ENCODE measurements at regions of chr14 and their contacts with region 1.

Region 1: DNA sequence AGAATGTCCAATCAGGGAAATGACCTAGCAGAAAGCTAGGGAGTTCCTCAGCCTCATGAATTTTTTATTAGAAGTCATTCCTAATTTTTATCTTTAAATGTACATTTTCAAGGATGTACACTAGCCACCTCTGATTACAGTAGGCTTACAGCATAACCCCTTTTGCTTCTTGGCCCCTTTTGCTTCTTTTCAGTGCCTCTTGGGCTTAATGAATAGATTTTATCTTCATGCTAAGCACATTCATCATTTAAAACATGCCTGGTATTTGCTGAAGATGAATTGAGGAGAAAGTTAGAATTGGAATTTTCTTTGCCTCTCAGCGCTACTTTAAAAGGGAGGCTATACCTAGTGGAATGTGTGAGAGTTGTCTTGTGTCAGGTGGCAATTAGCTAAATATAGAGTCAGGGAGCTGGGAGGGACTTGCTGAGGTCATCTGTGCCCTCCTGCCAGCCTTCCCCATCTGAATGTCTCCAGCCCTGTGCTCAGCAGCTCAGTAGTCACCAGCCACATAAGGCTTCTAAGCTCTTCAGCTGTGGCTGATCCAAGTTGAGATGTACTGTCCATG is 132.1 kb downstream of the SAMD4A start:
- DNase-seq: no peak
- H3K4me3 ChIP-seq: no peak overlapping the region
- H3K27ac ChIP-seq: no peak overlapping the region
- H3K4me1 ChIP-seq: peaks cover 10% of the 10 kb centered on the region
- H3K27me3 ChIP-seq: no peaks in the 10 kb centered on the region
- CTCF ChIP-seq: no peak

Region 2: DNA sequence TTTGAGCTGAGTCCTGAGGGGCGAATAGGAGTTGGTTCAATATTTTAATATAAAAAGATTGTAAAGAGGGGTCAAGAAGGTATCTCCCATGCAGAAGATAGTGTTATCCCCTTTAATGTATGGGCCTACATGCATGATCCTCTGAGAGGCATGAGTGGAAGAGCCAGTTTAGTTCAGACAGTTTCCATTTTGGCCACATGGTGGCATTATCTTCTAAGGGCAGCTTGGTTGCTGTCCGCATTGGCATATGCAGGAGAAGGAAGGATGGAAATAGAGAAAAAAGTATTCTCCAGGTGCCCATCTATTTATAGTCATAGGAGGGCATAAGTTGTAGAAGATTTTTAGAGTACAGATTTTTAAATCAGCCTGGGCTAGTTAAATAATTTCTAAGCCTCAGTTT is 126.7 kb before region 1 on chr14:
- CTCF ChIA-PET with region 1: no interaction called
- POLR2A ChIA-PET with region 1: interaction called, 10 read pairs
- intact Hi-C with region 1: no loop called
- DNase-seq: peak; percentile 67
- H3K4me3 ChIP-seq: no peak overlapping the region
- H3K27ac ChIP-seq: no peak overlapping the region
- H3K4me1 ChIP-seq: peaks cover 21% of the 10 kb centered on the region
- H3K27me3 ChIP-seq: no peaks in the 10 kb centered on the region
- CTCF ChIP-seq: peak; percentile 61

Region 3: GRCh38 chr14:54981698-54982097 is 282.6 kb after region 1 on chr14:
- CTCF ChIA-PET with region 1: no interaction called
- POLR2A ChIA-PET with region 1: no interaction called
- intact Hi-C with region 1: no loop called
- DNase-seq: peak; percentile 11
- H3K4me3 ChIP-seq: no peak overlapping the region
- H3K27ac ChIP-seq: no peak overlapping the region
- H3K4me1 ChIP-seq: no peaks in the 10 kb centered on the region
- H3K27me3 ChIP-seq: no peaks in the 10 kb centered on the region
- CTCF ChIP-seq: no peak; the same call in 1 of the 2 replicates

Region 4: GRCh38 chr14:55957950-55958349 is 1258.9 kb after region 1 on chr14:
- CTCF ChIA-PET with region 1: no interaction called
- POLR2A ChIA-PET with region 1: no interaction called
- intact Hi-C with region 1: no loop called
- DNase-seq: no peak
- H3K4me3 ChIP-seq: no peak overlapping the region
- H3K27ac ChIP-seq: no peak overlapping the region
- H3K4me1 ChIP-seq: no peaks in the 10 kb centered on the region
- H3K27me3 ChIP-seq: no peaks in the 10 kb centered on the region
- CTCF ChIP-seq: no peak

Measured in A673 (cell line).